AG04449 (cell line): ENCODE measurements at regions of chr20 and their contacts with region 1.

Region 1: DNA sequence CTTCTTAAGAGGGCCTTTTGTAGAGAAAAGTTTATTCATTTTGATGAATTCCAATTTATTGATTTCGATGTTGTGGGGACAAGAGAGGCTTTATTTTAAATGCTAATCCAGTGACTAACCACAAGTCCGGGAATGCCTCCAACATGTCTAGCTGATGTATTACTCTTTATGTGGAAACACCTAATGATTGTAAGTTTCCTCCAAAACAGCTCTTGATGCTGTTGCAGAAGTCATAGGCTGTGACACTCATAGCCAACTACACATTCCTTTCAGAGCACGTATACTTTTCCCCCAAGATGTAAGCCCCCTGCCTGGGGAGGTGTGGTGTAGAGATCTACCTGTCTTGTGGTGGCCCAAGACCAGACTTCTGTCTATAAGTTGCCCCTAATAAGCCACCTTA is 61.3 kb upstream of the RNF24 start:
- DNase-seq: peak; percentile 59
- H3K4me3 ChIP-seq: no peak overlapping the region
- CTCF ChIP-seq: no peak

Region 2: DNA sequence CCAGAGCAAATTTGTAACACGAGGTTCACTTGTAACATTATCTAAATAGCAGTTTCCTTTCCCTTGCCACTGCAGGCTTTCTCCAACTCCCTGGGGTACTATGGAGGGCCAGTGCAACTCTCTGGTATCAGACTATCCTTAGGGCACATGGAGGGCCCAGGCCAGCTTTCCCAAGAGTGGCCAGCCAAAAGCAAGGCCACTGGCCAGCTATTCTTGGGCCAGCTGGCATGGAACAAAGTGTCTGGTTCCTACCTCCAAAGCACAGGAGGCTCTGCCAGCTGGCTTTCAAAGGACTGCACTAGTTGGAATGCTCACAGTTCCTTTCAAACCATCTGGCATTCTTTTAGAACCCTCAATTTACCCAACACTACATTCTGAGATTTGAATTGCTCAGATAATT is 70.0 kb before region 1 on chr20:
- CTCF ChIA-PET with region 1: interaction called, 99 read pairs
- POLR2A ChIA-PET with region 1: no interaction called
- DNase-seq: no peak
- H3K4me3 ChIP-seq: no peak overlapping the region
- CTCF ChIP-seq: no peak

Region 3: DNA sequence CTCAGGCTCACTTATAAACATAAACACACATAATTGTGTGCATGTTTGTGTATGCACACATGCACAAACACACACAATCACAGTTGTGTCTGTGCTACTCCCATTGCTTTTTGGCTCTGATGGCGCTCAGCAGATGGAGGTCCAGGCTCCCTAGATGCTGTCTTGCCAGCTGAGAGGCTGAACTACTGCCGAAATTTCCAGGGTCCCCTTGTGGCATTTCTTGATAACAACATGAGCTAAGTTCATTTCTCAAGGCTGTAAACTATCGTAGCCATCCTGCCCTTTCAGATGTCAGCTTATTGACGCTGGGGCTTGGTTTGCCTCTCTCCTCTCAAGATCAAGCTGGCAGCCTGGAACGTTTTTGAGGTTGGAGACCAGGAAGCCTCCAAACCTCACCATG is 252.6 kb after region 1 on chr20:
- CTCF ChIA-PET with region 1: no interaction called
- POLR2A ChIA-PET with region 1: no interaction called
- DNase-seq: no peak
- H3K4me3 ChIP-seq: no peak overlapping the region
- CTCF ChIP-seq: no peak

Region 4: DNA sequence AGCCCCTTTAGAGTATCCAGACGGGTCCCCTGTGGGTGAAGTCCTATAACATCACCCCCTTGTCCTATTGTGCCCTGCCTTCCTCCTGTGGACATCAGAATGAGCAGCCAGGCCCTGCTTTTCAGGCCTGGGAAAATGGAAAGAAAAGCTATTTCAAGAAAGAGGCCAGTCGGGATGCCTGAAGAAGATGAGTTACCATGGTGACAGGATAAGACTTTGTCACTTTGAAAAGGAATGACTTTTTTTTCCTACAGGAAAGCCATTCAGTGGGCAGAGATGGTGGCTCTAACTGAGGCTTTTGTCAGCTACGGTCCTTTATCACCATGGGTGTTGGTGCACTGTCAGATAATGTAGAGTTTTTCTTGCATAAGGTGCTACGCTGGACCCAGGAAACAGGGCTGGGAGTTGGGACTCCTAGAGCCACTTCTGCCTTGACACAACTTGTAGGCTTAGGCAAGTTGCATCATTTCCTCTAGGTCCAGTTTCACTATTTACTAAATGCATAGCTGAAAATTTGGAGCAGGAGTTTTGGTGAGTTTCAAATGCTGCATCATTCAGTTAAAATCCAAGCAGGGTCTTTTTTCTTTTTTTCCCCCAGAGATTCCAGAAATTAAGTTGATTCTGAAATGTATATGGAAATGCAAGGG is 351.4 kb after region 1 on chr20:
- CTCF ChIA-PET with region 1: no interaction called
- POLR2A ChIA-PET with region 1: no interaction called
- DNase-seq: no peak
- H3K4me3 ChIP-seq: no peak overlapping the region
- CTCF ChIP-seq: no peak

Region 5: GRCh38 chr20:4645646-4646045 is 569.0 kb after region 1 on chr20:
- CTCF ChIA-PET with region 1: no interaction called
- POLR2A ChIA-PET with region 1: no interaction called
- DNase-seq: no peak
- H3K4me3 ChIP-seq: no peak overlapping the region
- CTCF ChIP-seq: no peak